ENCODE measurements at regions of chr6 and their contacts with region 1.

Region 1: DNA sequence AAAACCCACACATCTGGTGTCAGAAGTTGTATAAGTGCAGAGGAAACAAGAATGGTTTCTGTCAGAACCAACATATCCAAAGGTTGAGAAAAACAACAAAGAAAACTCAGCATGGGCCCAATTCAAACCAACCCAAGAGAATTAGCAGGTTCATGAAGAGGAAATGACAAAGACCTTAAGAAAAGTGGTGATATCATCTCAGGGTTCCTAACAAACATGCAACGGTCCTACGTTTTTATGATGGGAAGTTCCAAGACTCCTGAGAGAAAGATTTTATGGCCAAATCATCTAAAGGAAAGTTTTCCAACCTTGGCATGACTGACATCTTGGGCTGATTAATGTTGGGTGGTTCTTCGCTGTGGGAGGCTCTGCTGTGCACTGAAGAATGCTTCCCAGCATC is 23.0 kb downstream of the TFB1M start:
- DNase-seq: no peak
- H3K4me3 ChIP-seq: no peak overlapping the region
- H3K27ac ChIP-seq: no peak overlapping the region
- H3K4me1 ChIP-seq: peaks cover 5% of the 10 kb centered on the region
- H3K27me3 ChIP-seq: no peaks in the 10 kb centered on the region
- CTCF ChIP-seq: no peak
- POLR2A ChIP-seq: no peak

Region 2: GRCh38 chr6:155117266-155117665 is 174.0 kb before region 1 on chr6:
- CTCF ChIA-PET with region 1: no interaction called
- POLR2A ChIA-PET with region 1: no interaction called
- dilution Hi-C with region 1: no loop called
- intact Hi-C with region 1: no loop called
- DNase-seq: no peak
- H3K4me3 ChIP-seq: no peak overlapping the region
- H3K27ac ChIP-seq: no peak overlapping the region
- H3K4me1 ChIP-seq: no peaks in the 10 kb centered on the region
- H3K27me3 ChIP-seq: no peaks in the 10 kb centered on the region
- CTCF ChIP-seq: no peak
- POLR2A ChIP-seq: no peak

Region 3: GRCh38 chr6:155260686-155261085 is 30.6 kb before region 1 on chr6:
- CTCF ChIA-PET with region 1: no interaction called
- POLR2A ChIA-PET with region 1: no interaction called
- dilution Hi-C with region 1: no loop called
- intact Hi-C with region 1: no loop called
- DNase-seq: no peak
- H3K4me3 ChIP-seq: no peak overlapping the region
- H3K27ac ChIP-seq: no peak overlapping the region
- H3K4me1 ChIP-seq: peaks cover 7% of the 10 kb centered on the region
- H3K27me3 ChIP-seq: no peaks in the 10 kb centered on the region
- CTCF ChIP-seq: no peak
- POLR2A ChIP-seq: no peak

Region 4: GRCh38 chr6:155278319-155279049 is 12.8 kb before region 1 on chr6:
- CTCF ChIA-PET with region 1: interaction called, 5 read pairs
- POLR2A ChIA-PET with region 1: no interaction called
- dilution Hi-C with region 1: no loop called
- intact Hi-C with region 1: loop called (anchors 2 kb)
- DNase-seq: no peak
- H3K4me3 ChIP-seq: no peak overlapping the region
- H3K27ac ChIP-seq: no peak overlapping the region
- H3K4me1 ChIP-seq: peaks cover 27% of the 10 kb centered on the region
- H3K27me3 ChIP-seq: no peaks in the 10 kb centered on the region
- CTCF ChIP-seq: no peak
- POLR2A ChIP-seq: no peak

Region 5: DNA sequence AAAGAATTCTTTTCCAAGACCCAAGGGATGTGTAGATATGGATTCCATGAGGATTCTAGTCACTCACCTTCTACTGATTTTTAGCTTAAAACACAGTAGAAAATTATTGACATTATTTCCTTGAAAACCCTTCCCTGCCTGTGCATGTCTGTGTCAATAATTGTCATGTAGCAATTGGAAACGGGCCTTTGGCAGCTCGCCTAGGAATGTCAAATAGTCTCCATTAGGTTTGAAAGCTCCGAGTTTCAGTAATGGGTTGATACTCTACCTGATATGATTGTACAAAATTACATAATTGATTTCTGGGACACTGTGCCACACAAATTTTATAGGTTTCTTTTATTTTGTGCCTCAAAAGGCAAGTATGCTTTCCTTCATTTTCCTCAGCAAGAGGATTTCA is 970.7 kb after region 1 on chr6:
- CTCF ChIA-PET with region 1: no interaction called
- POLR2A ChIA-PET with region 1: no interaction called
- dilution Hi-C with region 1: no loop called
- intact Hi-C with region 1: no loop called
- DNase-seq: no peak
- H3K4me3 ChIP-seq: no peak overlapping the region
- H3K27ac ChIP-seq: no peak overlapping the region
- H3K4me1 ChIP-seq: no peaks in the 10 kb centered on the region
- H3K27me3 ChIP-seq: no peaks in the 10 kb centered on the region
- CTCF ChIP-seq: no peak
- POLR2A ChIP-seq: no peak